Right ventricle myocardium superior (tissue), 1 donor: ENCODE measurements at regions of chr22 and their contacts with region 1.

Region 1: GRCh38 chr22:45994491-45995404 is 17.8 kb upstream of the WNT7B start:
- DNase-seq: peak; percentile 92
- ATAC-seq: peak; percentile 65

Region 2: GRCh38 chr22:45896261-45896951 is 98.3 kb before region 1 on chr22:
- intact Hi-C with region 1: no loop called
- DNase-seq: peak; percentile 14
- ATAC-seq: no peak

Region 3: DNA sequence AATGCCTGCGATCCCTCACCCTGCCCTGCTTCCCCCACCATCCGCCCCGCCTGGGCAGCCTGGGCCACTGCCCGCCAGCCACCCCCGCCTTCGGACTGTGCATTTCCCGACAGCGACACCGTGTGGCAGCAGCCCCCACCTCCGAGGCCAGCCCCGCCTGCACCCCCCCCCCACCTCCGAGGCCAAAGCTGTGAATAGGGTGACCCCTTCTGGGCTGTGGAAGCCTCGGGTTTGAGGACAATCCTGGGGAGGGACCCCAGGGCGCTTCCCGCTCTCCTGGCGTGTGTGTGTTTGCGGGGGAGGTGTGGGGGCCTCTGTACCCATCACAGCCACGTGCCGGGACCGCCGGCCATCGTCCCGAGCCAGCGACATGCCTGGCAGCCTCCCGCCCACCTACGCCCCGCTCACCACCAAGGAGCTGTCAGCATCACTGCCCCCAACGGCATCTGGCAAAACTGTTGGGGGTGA is 121.8 kb after region 1 on chr22:
- intact Hi-C with region 1: loop called (anchors 2 kb)
- DNase-seq: peak; percentile 97
- ATAC-seq: peak; percentile 77

Region 4: GRCh38 chr22:46317646-46318045 is 322.9 kb after region 1 on chr22:
- intact Hi-C with region 1: loop called (anchors 5 kb)
- DNase-seq: no peak
- ATAC-seq: no peak